ENCODE measurements at regions of chr3 and their contacts with region 1.

Region 1: DNA sequence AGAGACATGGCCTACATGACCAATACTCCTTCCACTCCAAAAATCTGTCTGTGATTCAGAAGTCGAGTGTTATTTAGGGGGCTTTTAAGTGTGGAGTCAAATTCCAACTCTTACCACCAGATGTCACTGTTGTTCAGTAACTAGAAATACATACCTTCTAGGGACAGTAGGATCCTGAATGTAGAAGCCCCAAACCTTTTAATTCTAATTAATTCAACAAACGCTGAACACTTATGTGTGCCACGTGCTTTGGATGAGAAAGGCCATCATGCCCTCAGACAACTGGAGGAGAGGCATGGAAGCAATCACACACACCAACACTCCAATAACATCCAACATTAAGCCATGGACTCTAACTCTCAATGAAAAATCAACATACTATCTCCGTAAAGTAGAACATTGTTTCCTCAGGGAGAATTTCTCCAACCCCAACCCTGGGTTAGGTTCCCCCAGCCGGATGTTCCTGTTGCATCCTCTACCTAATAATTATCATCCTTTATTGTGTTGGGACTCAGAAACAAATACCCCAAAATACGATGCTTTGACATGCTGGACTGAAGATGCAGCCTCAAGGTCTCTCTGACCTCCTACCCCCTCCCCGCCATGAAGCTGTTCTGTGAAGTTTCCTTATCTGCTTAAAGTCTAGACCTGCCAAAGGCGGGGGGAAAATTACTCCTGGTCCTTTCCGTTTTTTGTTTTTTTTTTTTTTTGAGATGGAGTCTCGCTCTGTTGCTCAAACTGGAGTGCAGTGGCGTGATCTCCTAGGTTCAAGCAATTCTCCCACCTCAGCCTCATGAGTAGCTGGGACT is 8.0 kb upstream of the CCDC13 start:
- DNase-seq: no peak
- H3K4me3 ChIP-seq: no peak overlapping the region
- H3K27ac ChIP-seq: peak overlapping the region in 3 of 4 donors; percentile 78 to 87 (median 80)
- H3K4me1 ChIP-seq: peaks cover 0 to 76% (median 21%) of the 10 kb centered on the region in 3 donors
- H3K27me3 ChIP-seq: no peaks in the 10 kb centered on the region
- CTCF ChIP-seq: peak; percentile 73 to 84 (median 82)
- POLR2A ChIP-seq: no peak

Region 2: DNA sequence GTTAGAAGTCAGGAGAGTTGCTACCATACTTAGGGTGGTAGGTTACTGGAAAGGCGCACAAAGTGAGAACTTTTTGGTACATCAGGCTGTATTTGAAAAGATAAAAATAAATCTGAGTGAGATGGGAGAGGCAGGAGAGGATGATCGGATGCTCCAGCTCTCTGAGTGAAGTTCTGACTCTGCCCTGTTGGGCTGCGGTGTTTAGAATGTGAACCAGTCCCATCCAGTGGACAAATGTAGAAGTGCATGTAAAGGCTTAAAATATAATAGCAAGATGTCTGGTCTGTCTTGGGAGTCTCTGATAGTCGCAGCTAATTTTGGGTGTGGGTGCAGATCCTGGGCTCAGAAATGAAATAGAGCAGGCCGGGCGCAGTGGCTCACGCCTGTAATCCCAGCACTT is 58.5 kb after region 1 on chr3:
- intact Hi-C with region 1: loop called (anchors 5 kb)
- DNase-seq: no peak
- H3K4me3 ChIP-seq: no peak overlapping the region
- H3K27ac ChIP-seq: no peak overlapping the region
- H3K4me1 ChIP-seq: peaks cover 0 to 30% (median 3%) of the 10 kb centered on the region in 3 donors
- H3K27me3 ChIP-seq: no peaks in the 10 kb centered on the region
- CTCF ChIP-seq: peak; percentile 38 to 91 (median 83)
- POLR2A ChIP-seq: no peak

Region 3: DNA sequence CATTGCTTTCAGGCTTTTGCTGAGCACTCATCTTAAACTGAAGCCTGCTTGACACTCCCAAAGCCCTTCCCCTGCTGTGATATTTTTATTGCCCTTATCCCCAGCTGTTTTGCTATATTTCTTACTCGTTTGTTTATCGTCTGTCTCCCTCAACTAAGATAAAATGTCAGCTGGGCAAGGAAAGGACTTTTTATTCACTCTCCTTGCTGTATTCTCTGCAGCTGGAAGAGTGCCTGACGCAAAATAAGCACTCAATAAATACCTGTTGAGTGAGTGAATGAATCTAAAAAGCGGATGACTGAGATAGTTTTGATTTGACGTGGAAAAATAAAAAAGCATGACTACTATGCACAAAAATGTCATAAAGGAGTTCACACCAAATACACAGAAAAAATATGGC is 409.6 kb after region 1 on chr3:
- intact Hi-C with region 1: no loop called
- DNase-seq: no peak
- H3K4me3 ChIP-seq: no peak overlapping the region
- H3K27ac ChIP-seq: no peak overlapping the region
- H3K4me1 ChIP-seq: no peaks in the 10 kb centered on the region
- H3K27me3 ChIP-seq: peaks cover 0 to 22% (median 0%) of the 10 kb centered on the region in 4 donors
- CTCF ChIP-seq: no peak
- POLR2A ChIP-seq: no peak